Breast epithelium (tissue), 4 donors: ENCODE measurements at regions of chr13 and their contacts with region 1.

Region 1: DNA sequence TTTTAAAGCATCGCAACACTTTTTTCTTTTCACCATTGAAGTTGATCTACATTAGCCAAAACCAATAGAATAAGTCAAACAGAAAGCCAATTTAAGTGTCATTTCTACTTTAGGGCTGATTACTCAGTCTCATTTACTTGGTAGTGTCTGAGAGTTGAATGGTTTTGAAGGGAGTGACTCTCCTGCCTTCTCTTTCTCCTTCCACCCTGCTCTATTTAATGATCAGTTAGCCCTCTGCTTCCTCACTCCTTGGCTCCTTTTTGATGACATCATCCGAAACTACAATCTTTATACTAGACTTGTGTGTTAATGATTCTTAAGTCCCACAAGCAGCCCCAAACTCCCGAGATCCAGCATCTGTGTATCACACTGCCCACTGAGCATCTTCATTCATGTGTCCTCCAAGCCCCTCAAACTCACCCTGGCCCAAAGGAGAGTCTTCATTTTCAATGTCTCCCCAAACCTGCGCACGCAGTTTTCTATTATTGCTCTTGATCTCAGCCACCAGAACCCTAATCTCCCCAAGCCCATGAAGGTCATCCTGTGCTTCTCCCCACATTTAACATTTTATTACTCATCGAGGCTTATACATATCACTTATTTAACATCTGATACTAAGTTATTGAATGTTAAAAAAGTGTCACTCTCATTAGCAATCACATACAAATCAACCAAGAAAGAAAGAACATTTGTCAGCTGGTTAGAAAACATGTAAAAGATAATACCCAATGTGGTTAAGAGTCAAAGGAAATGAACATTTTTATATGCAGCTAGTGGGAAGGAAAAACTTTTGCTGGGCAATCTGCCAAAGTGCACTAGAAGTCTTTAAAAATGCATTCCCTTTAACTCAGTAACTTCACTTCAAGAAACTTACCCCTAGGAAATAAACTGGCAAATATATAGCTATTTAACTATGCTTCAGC is 32.2 kb upstream of the ARGLU1 start:
- DNase-seq: no peak
- H3K4me3 ChIP-seq: no peak overlapping the region
- H3K27ac ChIP-seq: no peak overlapping the region
- H3K4me1 ChIP-seq: no peaks in the 10 kb centered on the region
- H3K27me3 ChIP-seq: no peaks in the 10 kb centered on the region
- CTCF ChIP-seq: no peak
- POLR2A ChIP-seq: no peak

Region 2: GRCh38 chr13:105997581-105998550 is 602.3 kb before region 1 on chr13:
- intact Hi-C with region 1: no loop called
- DNase-seq: no peak
- H3K4me3 ChIP-seq: peak overlapping the region in 2 of 3 donors; percentile 13 to 51
- H3K27ac ChIP-seq: peak overlapping the region; percentile 18 to 55
- H3K4me1 ChIP-seq: no peaks in the 10 kb centered on the region
- H3K27me3 ChIP-seq: no peaks in the 10 kb centered on the region
- CTCF ChIP-seq: no peak
- POLR2A ChIP-seq: no peak

Region 3: GRCh38 chr13:106619688-106620555 is 19.8 kb after region 1 on chr13:
- intact Hi-C with region 1: no loop called
- DNase-seq: no peak
- H3K4me3 ChIP-seq: peak overlapping the region in 2 of 3 donors; percentile 12 to 21
- H3K27ac ChIP-seq: peak overlapping the region in 1 of 2 donors; percentile 23
- H3K4me1 ChIP-seq: no peaks in the 10 kb centered on the region
- H3K27me3 ChIP-seq: no peaks in the 10 kb centered on the region
- CTCF ChIP-seq: peak; percentile 64 to 87 (median 81)
- POLR2A ChIP-seq: no peak

Region 4: GRCh38 chr13:107441279-107441678 is 841.1 kb after region 1 on chr13:
- intact Hi-C with region 1: loop called (anchors 10 kb)
- DNase-seq: no peak
- H3K4me3 ChIP-seq: no peak overlapping the region
- H3K27ac ChIP-seq: no peak overlapping the region
- H3K4me1 ChIP-seq: no peaks in the 10 kb centered on the region
- H3K27me3 ChIP-seq: no peaks in the 10 kb centered on the region
- CTCF ChIP-seq: no peak
- POLR2A ChIP-seq: no peak